ENCODE measurements at regions of chr11 and their contacts with region 1.

Region 1: DNA sequence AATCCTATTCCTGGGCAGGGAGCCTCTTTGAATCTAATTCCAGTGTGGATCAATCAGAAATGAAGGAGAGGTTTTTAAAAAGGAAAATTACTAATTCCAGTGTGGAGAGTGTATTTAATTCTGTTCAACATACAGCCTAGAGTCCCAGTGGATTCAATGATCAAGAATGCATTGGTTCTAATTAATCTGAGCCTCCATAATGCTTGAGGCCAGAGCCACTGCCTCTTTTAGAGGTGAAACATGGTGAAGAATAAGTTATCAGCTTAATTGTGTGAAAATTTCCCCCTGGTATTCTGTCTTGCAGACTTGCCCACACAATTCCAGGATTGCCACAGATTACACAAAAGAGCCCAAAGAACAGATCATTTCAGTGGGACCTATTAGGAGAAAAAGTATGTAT is 87.7 kb downstream of the TECTA start:
- DNase-seq: no peak
- ATAC-seq: no peak
- H3K4me3 ChIP-seq: no peak overlapping the region
- H3K27ac ChIP-seq: no peak overlapping the region
- H3K4me1 ChIP-seq: peaks cover 0 to 10% (median 0%) of the 10 kb centered on the region in 9 donors
- H3K27me3 ChIP-seq: no peaks in the 10 kb centered on the region
- CTCF ChIP-seq: no peak

Region 2: DNA sequence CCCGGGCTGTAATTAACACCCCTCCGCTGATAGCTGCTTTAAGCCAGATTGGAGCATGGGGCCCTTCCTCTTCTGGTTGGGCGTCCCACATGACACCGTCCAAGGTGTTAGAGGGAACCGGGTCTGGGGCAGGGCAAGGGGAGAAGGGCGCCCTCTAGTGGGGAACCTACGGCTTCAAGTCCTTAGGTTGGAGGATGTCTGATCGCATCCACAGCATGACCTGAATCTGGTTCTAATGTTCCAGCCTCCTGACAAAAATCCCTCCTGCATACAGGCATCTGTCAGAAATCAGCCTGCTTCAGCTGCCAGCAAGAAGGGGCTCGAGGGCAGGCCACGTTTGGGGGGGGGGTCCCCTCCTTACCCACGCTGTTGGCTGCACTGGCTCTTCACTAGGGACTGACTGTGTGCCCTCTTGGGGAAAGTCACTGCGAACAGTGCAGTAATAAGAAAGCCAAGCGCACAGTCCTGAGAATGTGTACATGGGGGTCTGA is 259.1 kb before region 1 on chr11:
- intact Hi-C with region 1: loop called in 3 of 10 experiments (anchors 5 to 10 kb)
- DNase-seq: peak in 1 of 2 donors; percentile 42
- ATAC-seq: peak; percentile 31 to 85 (median 73)
- H3K4me3 ChIP-seq: no peak overlapping the region
- H3K27ac ChIP-seq: no peak overlapping the region
- H3K4me1 ChIP-seq: no peaks in the 10 kb centered on the region
- H3K27me3 ChIP-seq: peaks cover 0 to 24% (median 5%) of the 10 kb centered on the region in 7 donors
- CTCF ChIP-seq: peak; percentile 21 to 69 (median 51)

Region 3: GRCh38 chr11:121048464-121049233 is 140.1 kb before region 1 on chr11:
- intact Hi-C with region 1: no loop called
- DNase-seq: no peak
- ATAC-seq: no peak
- H3K4me3 ChIP-seq: no peak overlapping the region
- H3K27ac ChIP-seq: no peak overlapping the region
- H3K4me1 ChIP-seq: no peaks in the 10 kb centered on the region
- H3K27me3 ChIP-seq: no peaks in the 10 kb centered on the region
- CTCF ChIP-seq: no peak